ENCODE measurements at regions of chr2 and their contacts with region 1.

Region 1: DNA sequence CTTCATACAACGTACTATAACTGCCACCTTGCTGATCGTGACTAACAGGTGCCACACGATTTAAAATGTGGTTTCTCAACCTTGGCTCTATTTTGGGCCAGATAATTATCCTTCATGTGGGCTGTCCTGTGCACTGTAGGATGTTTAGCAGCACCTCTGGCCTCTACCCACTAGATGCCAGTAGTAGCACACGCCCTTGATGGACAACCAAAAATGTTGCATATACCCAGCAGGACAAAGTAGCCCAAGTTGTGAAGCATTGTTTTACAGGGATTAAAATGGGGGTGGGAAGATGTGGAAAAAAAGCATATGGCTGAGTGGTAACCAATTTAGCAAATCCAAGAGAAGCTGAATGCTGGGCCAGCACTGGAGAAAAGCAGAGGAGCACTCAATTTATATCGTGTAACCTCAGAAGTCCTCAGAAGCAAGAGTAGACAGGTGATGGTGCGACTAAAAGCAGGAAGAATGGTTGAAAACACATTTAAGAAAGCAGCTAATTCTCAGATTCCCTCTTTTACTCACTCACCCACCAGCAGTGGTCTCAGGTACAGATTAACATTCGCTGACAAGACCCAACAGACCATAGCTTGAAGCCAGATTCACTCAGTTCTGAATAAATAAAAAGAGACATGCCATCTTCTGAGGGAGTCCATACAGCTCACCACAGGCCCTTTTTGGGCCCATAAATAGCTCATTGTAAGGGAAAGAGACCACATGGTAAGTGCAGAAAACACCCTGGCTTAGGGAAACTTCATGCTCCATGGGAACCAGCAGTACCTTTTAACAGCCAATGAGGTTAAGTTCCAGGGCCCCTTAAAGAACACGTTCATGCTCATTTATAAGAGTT is 50.6 kb downstream of the RAPH1 start:
- DNase-seq: peak; percentile 33
- H3K4me3 ChIP-seq: no peak overlapping the region
- H3K27ac ChIP-seq: no peak overlapping the region
- H3K4me1 ChIP-seq: no peaks in the 10 kb centered on the region
- H3K27me3 ChIP-seq: no peaks in the 10 kb centered on the region
- CTCF ChIP-seq: peak; percentile 54

Region 2: DNA sequence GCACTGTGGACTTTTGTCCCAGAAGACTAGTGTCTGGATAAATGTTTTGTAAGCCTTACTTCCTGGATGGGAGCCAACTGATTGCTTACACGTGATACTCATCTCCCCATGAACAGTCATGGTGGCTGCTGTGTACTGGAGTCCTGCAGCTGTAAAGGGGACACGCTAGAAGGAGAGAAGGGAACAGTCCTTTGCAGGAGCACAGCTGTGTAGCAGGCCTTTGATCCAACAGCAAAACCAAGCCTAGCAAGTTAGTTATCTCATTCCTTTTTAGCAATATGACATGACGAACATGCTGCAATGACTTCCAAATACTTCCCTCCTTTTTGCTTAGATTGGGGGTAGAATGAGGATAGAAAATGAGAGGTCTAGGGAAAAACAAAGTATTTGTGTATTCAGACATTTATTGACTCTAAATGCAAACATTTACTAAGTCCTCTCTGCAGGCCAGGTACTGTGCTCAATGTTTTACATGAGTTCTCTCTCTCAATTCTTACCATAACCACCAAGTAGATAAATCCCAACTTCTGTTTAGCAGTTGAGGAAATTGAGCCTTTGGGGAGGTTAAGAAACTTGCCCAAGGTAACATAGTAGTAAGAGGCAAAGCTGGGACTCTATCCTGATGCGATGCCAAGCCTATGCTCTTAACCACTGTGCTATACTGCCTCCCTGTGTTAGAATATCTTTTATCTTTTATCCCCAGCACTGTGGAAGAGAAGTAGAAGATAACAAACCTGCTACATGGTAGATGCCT is 166.5 kb after region 1 on chr2:
- intact Hi-C with region 1: loop called (anchors 10 kb)
- DNase-seq: peak; percentile 85
- H3K4me3 ChIP-seq: no peak overlapping the region
- H3K27ac ChIP-seq: peak overlapping the region; percentile 87
- H3K4me1 ChIP-seq: peaks cover 20% of the 10 kb centered on the region
- H3K27me3 ChIP-seq: no peaks in the 10 kb centered on the region
- CTCF ChIP-seq: peak; percentile 17

Region 3: GRCh38 chr2:203814661-203815540 is 330.4 kb after region 1 on chr2:
- intact Hi-C with region 1: loop called (anchors 5 kb)
- DNase-seq: peak; percentile 71
- H3K4me3 ChIP-seq: no peak overlapping the region
- H3K27ac ChIP-seq: peak overlapping the region; percentile 62
- H3K4me1 ChIP-seq: peaks cover 4% of the 10 kb centered on the region
- H3K27me3 ChIP-seq: no peaks in the 10 kb centered on the region
- CTCF ChIP-seq: peak; percentile 81

Region 4: GRCh38 chr2:203909974-203910373 is 425.5 kb after region 1 on chr2:
- intact Hi-C with region 1: loop called (anchors 10 kb)
- DNase-seq: no peak
- H3K4me3 ChIP-seq: no peak overlapping the region
- H3K27ac ChIP-seq: no peak overlapping the region
- H3K4me1 ChIP-seq: no peaks in the 10 kb centered on the region
- H3K27me3 ChIP-seq: no peaks in the 10 kb centered on the region
- CTCF ChIP-seq: no peak